PC-9 (cell line): ENCODE measurements at regions of chr6 and their contacts with region 1.

Region 1: DNA sequence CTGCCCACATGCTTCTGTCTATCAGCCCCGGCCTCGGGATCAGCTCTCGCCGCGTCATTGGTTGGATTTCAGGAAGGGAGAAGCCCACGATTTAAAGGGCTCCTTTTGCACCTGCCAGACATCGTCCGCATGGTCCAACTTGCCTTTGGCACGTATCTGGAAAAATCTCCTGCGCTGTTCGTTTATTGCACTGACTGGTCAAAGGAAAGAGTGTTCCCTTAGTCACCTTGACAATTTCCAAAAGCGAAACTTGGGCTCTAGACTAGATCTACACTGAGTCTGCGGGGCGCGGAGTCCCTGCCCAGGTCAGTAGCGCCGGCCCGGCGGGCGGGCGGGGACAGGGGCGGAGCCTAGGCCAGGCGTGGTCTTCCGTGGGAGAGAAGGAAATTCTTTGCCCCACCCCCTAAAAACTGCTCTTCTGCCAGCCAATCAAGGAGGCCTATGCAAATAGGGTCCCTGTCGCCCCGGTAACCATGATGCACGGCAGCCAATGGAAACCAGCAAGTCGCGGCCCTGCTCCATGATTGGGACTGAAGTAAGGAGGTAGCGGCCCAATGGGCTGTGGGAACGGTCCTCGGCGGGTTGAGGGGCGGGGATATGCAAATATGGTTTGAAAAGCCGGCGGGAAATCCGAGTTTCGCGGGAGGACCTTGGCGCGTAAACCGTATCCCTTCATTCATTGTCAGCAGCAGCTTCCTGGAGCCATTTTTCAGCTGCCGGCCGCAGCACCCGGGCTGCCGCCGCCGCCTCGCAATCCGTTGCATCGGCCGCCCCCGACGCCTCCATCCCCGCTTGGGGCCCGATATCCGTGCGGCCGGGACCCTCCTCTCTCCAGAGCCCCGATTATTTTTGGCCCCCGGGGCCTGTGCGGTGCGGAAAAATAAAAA is at the start of gene E2F3:
- DNase-seq: peak; percentile 99 to 100
- H3K4me3 ChIP-seq: peak within 1 kb of the TSS; percentile 93
- H3K27ac ChIP-seq: peak within 1 kb of the TSS; percentile 95
- H3K4me1 ChIP-seq: peaks cover 16% of the 10 kb centered on the region
- H3K27me3 ChIP-seq: no peaks in the 10 kb centered on the region
- CTCF ChIP-seq: no peak
- total RNA-seq, gene E2F3: 15.7 and 20.0 TPM in 2 replicates

Region 2: GRCh38 chr6:20092071-20092566 is 309.3 kb before region 1 on chr6:
- CTCF ChIA-PET with region 1: no interaction called
- POLR2A ChIA-PET with region 1: no interaction called
- intact Hi-C with region 1: loop called (anchors 2 kb)
- DNase-seq: peak; percentile 17 to 49
- H3K4me3 ChIP-seq: no peak overlapping the region
- H3K27ac ChIP-seq: no peak overlapping the region
- H3K4me1 ChIP-seq: no peaks in the 10 kb centered on the region
- H3K27me3 ChIP-seq: no peaks in the 10 kb centered on the region
- CTCF ChIP-seq: peak; percentile 87

Region 3: DNA sequence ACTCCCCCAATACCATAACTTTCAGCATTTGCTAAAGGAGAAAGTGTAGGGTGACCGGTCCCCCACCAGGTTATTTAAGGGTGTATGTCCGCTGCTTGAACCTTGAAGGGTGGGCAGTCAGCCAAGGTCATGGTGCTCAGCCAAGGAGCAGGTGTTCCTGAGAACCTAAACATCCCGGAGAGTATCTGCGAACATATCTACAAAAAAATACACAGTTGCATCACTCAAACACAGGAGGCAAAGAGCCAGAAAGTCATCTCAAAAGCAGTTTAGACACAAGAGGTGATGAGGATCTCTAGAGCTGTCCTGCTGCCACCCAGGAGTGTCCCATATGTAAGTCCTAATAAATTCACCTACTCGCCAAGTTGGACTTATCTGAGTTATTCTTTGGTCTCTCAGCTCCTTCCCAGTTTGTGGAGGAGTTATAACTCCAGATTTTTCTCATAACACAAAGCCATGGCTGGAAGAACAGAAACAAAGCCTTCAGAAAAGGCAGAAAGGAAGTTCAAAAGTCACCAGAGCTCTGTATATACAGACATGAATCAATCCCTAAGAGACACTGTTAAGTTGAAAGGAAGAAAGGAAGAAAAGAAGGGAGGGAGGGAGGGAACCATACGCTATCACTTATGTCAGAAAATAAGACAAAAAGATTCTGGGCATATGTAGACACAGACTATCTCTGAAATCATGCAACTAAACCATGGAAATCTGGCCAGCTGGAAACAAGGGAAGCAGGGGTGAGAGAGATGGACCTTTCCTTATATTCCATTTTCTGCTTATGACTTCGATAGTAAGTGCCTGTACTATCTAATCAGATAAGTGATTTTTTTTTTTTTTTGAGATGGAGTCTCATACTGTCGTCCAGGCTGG is 200.5 kb before region 1 on chr6:
- CTCF ChIA-PET with region 1: interaction called, 16 read pairs
- POLR2A ChIA-PET with region 1: interaction called, 5 read pairs
- intact Hi-C with region 1: no loop called
- DNase-seq: no peak
- H3K4me3 ChIP-seq: no peak overlapping the region
- H3K27ac ChIP-seq: peak overlapping the region; percentile 57
- H3K4me1 ChIP-seq: peaks cover 16% of the 10 kb centered on the region
- H3K27me3 ChIP-seq: no peaks in the 10 kb centered on the region
- CTCF ChIP-seq: no peak

Region 4: GRCh38 chr6:20236909-20237600 is 164.4 kb before region 1 on chr6:
- CTCF ChIA-PET with region 1: no interaction called
- POLR2A ChIA-PET with region 1: no interaction called
- intact Hi-C with region 1: loop called (anchors 1 kb)
- DNase-seq: peak in 1 of 2 experiments; percentile 71
- H3K4me3 ChIP-seq: no peak overlapping the region
- H3K27ac ChIP-seq: peak overlapping the region; percentile 37
- H3K4me1 ChIP-seq: peaks cover 19% of the 10 kb centered on the region
- H3K27me3 ChIP-seq: no peaks in the 10 kb centered on the region
- CTCF ChIP-seq: no peak

Region 5: DNA sequence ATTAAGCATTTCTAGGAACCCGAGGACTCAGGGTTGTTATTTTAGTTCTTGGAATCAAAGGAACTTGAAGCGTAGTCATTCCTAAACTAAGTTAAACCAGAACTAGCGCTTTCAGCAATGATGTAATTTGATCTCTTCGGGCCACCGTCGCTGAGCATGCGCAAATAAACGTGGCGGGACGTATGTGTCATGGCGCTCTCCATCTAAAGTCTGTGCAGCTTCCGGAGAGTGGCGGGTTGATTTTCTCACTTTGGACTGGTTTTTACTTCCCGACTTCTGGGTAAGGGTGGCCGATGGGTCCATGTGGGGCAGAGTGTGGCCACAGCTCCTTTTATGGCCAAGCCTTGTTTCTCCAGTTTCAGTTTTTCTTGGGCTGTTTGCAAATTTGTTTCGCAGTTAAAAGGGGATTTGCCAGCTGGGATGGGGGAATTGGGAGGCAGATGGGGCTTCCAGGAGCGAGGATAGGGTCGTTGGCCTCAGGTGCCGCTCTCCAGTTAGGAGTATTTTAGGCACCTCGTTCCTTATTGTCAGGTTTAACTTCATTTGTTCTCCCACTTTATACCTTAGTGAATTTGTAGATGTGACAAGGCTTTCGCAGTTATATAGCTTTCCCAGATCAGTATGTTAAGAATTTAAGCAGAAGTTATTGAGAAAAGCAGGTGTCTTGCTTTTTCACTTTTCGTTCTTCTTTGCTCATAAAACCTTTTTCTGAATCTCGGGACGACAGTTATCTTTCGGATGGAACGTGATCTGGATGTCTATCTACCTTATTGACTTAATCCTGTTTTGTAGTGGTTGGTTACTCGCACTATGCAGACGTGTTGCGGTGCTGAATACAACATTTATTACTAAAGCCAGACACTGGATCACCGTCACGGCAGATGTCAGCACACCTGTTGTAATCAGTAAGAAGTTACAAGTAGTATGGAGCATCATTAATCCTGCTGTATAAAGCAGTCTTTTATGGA is 133.1 kb after region 1 on chr6 and contains the start of gene CDKAL1:
- CTCF ChIA-PET with region 1: no interaction called
- POLR2A ChIA-PET with region 1: interaction called, 5 read pairs
- intact Hi-C with region 1: loop called (anchors 2 kb)
- DNase-seq: peak; percentile 79 to 81
- H3K4me3 ChIP-seq: peak within 1 kb of the TSS; percentile 77
- H3K27ac ChIP-seq: peak within 1 kb of the TSS; percentile 58
- H3K4me1 ChIP-seq: peaks cover 13% of the 10 kb centered on the region
- H3K27me3 ChIP-seq: no peaks in the 10 kb centered on the region
- CTCF ChIP-seq: no peak
- total RNA-seq, gene CDKAL1: 11.5 and 16.1 TPM in 2 replicates